GM18951 (cell line): ENCODE measurements at regions of chr1 and their contacts with region 1.

Region 1: GRCh38 chr1:183915625-183916510 is 110.9 kb downstream of the RGL1 start:
- POLR2A ChIP-seq: no peak

Region 2: DNA sequence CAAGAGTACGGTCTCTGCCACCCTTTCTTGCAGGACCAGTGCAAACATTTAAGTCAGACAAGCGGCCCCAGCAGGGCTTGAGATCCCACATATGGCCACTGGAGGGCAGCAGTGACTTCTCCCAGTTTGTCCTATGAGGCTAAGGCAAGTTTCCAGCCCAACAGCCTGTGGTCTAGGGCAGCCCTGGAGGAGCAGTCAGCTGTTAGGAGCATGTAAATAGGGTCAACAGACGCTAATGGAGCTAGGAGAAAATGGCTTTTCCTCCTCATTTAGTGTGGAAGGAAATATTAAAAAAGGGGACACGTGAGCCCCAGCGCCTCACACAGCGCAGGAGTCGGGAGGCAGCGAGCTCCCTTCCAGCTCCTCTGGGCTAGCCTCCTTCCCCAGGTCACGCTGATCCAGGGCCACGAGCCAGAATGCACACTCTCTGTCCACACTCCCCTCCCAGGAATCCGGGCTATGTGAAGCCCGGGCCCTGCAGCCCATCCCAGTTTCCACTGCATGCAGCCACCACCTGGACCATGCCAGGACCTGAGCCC is 634.2 kb before region 1 on chr1:
- in situ Hi-C with region 1: loop called (anchors 25 kb)
- POLR2A ChIP-seq: no peak

Region 3: GRCh38 chr1:183646776-183647175 is 269.1 kb before region 1 on chr1:
- in situ Hi-C with region 1: loop called (anchors 10 kb)
- POLR2A ChIP-seq: no peak

Region 4: GRCh38 chr1:183989078-183989577 is 73.3 kb after region 1 on chr1:
- in situ Hi-C with region 1: no loop called
- POLR2A ChIP-seq: no peak